Calu3 (cell line): ENCODE measurements at regions of chr5 and their contacts with region 1.

Region 1: DNA sequence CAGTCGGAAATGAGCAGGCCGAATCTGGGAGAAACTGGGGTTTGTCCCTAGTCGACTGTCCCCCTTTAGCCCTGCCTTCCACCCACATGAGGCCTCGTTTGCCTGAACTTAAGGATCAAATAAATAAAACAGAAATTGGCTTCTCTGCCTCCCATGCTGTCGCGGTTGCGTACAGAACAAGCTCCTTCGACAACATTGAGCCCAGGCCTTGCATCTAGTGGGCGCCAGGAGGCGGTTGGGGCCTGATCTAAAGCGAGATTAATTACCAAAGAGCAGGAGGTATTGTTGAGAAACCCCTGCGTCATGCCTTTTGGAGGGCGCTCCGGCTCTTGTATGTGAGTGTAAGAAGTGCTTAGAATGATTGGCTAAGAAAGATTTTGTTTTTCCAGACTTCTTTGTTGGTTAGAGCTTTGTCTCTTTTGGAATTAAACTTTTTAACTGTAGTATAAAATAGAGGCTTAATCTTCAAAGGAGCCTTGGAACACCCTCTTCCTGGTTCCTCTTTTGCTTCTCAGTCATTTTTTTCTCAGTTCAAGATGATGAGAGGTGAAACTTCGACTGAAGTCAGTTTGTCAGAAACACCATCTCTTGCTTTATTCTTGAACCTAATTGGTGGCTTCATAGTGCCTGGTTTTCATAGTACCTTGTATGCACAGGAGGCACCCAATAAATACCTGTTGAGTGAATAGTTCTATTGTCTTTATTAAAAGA is 827 bp downstream of the ATP6V0E1 start:
- DNase-seq: peak; percentile 78
- H3K4me3 Mint-ChIP-seq: peak overlapping the region; percentile 91
- H3K27ac Mint-ChIP-seq: peak overlapping the region; percentile 83
- H3K4me1 Mint-ChIP-seq: peaks cover 14% of the 10 kb centered on the region
- H3K27me3 Mint-ChIP-seq: no peaks in the 10 kb centered on the region
- CTCF ChIP-seq: peak; percentile 23

Region 2: GRCh38 chr5:173029499-173029921 is 45.1 kb after region 1 on chr5:
- CTCF ChIA-PET with region 1: interaction called, 4 read pairs
- intact Hi-C with region 1: loop called (anchors 5 kb)
- DNase-seq: no peak
- H3K4me3 Mint-ChIP-seq: no peak overlapping the region
- H3K27ac Mint-ChIP-seq: no peak overlapping the region
- H3K4me1 Mint-ChIP-seq: peaks cover 4% of the 10 kb centered on the region
- H3K27me3 Mint-ChIP-seq: no peaks in the 10 kb centered on the region
- CTCF ChIP-seq: no peak

Region 3: DNA sequence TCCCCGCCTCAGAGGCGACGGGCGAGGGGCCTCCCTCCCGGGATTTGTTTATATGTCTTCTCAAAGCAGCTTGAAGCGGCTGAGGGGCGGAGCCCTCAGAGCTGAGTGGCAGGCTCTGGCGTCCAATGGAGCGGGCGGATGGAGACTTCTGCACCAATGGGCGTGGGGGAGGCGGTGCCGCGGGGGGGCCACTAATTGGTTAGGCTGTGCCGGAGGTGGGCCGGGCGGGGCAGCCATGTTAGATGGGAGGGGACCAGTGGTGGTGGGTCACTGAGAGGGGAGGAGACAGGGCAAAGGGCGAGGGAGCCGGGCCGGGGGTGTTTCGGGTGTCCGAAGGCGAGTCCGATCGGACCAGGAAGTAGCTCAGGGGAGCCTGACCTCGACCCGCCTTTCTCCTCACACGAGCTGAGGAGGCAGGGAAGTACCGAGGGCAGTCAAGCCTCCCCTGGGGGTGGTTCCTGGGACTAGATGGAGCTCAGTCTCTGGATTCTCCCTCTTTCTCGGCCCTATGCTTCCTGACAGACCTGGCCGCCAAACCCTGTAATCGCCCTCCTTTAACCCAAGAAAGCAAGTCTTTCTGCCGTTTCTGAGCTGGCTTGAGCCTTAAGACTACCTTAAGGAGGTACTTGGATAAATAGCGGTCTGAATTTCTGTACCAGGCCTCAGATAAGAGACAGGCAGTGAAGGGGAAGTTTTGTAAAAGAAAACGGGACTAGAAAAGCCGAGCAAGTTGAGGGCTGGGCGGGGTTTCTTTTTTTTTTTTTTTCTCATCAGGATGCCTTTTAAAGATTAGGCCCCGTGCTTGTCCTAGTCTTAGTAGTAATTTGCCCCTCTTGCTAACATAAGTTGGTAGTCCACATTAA is 72.9 kb after region 1 on chr5:
- CTCF ChIA-PET with region 1: interaction called, 25 read pairs
- intact Hi-C with region 1: loop called (anchors 1 kb)
- DNase-seq: peak; percentile 100
- H3K4me3 Mint-ChIP-seq: peak overlapping the region; percentile 98
- H3K27ac Mint-ChIP-seq: peak overlapping the region; percentile 87
- H3K4me1 Mint-ChIP-seq: peaks cover 23% of the 10 kb centered on the region
- H3K27me3 Mint-ChIP-seq: no peaks in the 10 kb centered on the region
- CTCF ChIP-seq: no peak

Region 4: DNA sequence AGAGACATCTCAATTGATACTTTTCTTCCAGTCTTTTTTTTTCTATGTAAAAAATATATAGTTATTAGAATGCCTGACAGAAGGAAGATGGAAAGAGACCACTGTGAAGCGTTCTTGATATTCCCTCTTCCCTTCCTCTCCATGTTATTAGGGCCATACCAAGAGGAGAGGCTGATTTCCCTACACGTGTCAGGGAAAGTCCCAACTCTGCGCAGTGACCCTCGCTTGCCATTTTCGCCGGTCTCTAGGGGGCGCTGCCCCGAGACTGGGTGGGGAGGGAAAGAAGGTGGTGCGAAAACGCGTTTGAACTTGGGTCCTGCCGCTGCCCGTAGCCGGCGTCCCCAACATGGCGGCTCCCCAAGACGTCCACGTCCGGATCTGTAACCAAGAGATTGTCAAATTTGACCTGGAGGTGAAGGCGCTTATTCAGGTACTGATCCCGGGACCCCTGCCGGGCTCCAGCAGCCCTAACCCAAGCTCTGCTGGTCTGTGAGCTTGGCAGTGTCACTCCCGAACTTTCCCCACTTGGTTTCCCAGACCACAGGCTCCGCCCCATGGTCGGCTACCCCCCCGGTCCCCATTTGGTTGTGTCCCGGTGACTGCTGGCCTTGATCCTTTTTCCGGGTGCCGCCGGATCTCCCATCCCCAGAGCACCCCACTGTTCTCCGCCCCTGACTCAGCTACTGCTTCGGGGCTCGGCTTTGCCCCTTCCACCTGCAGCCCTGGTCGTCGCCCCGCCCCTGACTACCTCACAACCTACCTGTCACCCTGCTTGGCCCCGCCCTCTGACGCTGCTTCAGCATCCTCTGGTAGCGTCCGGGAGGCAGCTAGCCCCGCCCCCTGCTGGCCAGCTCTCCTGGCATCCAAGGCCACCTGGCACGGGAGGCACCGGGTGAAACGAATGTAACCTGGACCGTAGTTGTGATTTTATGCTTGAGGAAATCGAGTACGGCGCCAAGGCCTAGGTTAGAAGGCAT is 160.1 kb after region 1 on chr5 and contains the start of gene BNIP1:
- CTCF ChIA-PET with region 1: interaction called, 17 read pairs
- intact Hi-C with region 1: loop called (anchors 1 kb)
- DNase-seq: peak; percentile 100
- H3K4me3 Mint-ChIP-seq: peak within 1 kb of the TSS; percentile 100
- H3K27ac Mint-ChIP-seq: peak within 1 kb of the TSS; percentile 99
- H3K4me1 Mint-ChIP-seq: peaks cover 11% of the 10 kb centered on the region
- H3K27me3 Mint-ChIP-seq: no peaks in the 10 kb centered on the region
- CTCF ChIP-seq: peak; percentile 95
- total RNA-seq, gene BNIP1: 13.4 and 13.6 TPM in 2 replicates

Region 5: DNA sequence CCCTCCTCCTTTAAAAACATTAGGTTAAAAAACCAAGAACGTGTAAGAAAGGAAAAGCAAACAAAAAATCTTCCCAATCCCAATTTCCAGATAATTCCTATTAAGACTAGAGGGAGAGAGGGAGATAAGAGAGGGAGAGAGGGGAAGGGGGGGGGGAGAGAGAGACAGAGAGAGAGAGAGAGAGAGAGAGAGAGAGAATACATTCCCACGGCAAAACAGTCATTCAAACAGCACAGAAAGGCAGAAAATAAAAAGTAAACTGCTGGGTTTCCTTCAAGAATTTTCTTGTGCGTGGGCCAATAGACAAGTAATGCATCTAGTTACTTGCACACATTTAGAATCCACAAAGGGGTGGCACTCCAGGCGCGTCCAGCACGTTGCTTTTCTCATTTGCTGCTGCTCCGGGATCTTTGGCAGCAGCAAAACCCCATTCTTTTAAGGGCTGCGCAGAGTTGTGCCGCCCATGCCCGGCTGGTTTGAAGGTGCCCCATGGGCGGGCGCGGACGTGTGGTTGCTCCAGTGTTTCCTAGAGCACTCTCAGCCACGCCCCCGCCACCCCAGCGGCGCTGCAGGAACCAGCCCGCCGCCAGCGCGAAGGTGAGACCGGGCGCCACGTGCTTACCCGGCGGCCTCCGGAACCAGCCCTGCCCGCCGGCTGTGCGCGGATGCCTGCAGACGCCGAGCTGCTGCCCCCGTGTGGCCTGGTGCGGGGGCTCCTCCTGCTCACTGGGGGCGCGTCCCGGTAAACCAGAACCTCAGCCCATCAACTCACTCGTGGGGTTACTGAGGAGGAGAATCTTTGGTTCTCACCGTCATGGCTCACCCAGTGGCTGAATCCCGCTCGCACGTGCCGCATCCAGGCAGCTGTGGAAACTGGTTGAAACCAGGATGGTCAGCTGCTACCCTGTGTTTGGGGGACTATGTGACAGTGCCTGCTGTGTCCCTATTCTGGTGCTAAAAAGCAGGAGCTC is 299.2 kb after region 1 on chr5:
- CTCF ChIA-PET with region 1: interaction called, 3 read pairs
- intact Hi-C with region 1: loop called (anchors 2 kb)
- DNase-seq: peak; percentile 92
- H3K4me3 Mint-ChIP-seq: peak overlapping the region; percentile 24
- H3K27ac Mint-ChIP-seq: no peak overlapping the region
- H3K4me1 Mint-ChIP-seq: no peaks in the 10 kb centered on the region
- H3K27me3 Mint-ChIP-seq: peaks cover 96% of the 10 kb centered on the region
- CTCF ChIP-seq: peak; percentile 72